ENCODE measurements at regions of chr1 and their contacts with region 1.

Region 1: GRCh38 chr1:106785176-106785575 is 271.3 kb upstream of the PRMT6 start:
- DNase-seq: no peak
- H3K4me3 ChIP-seq: no peak overlapping the region
- H3K27ac ChIP-seq: no peak overlapping the region
- H3K4me1 ChIP-seq: no peaks in the 10 kb centered on the region
- H3K27me3 ChIP-seq: no peaks in the 10 kb centered on the region
- CTCF ChIP-seq: no peak

Region 2: DNA sequence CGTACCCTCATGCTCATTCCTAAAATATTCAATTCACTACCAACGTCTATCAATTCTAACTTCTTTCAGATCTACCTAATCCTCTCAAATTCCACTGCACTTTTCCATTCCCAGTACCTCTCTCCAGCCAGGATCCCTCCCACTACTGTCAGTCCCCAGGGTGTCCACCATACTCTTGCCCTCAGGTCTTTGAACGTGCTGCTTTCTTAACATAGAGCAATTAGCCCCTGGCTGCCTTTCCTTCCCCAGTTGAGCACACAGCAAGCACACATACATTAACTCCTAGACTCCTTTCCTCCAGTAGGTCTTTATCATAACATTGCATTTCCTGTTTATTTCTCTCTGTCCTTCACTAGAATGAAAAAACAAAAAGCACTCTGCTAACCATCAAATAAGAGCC is 482.3 kb after region 1 on chr1:
- CTCF ChIA-PET with region 1: no interaction called
- POLR2A ChIA-PET with region 1: no interaction called
- intact Hi-C with region 1: loop called (anchors 5 kb)
- DNase-seq: no peak
- H3K4me3 ChIP-seq: no peak overlapping the region
- H3K27ac ChIP-seq: no peak overlapping the region
- H3K4me1 ChIP-seq: no peaks in the 10 kb centered on the region
- H3K27me3 ChIP-seq: no peaks in the 10 kb centered on the region
- CTCF ChIP-seq: no peak

Measured in PC-9 (cell line).